Sciatic nerve (tissue), 2 donors: ENCODE measurements at regions of chr12 and their contacts with region 1.

Region 1: DNA sequence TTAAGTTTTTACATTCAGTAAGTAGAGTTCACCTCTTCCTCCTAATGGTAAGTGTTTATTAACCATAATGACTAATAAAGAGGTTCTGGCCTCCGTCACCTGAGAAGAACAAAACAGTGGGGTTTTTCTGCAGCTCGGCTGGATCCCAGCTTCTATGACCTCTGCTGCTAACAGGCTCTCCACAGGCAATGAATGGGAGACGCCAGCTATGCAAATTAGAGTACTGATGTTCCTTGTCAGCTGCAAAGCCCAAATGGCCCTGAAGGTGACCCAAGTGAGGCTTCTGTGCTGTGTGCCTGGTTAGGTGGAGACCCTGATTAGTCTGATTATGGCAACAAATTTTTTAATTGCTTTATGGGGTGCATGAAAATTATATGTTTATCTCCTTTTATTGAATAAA is 218.1 kb downstream of the APAF1 start:
- DNase-seq: no peak
- ATAC-seq: no peak

Region 2: GRCh38 chr12:98174428-98174809 is 688.7 kb before region 1 on chr12:
- intact Hi-C with region 1: loop called (anchors 10 kb)
- DNase-seq: no peak
- ATAC-seq: no peak

Region 3: GRCh38 chr12:99810718-99811593 is 947.8 kb after region 1 on chr12:
- intact Hi-C with region 1: no loop called
- DNase-seq: no peak
- ATAC-seq: peak; percentile 48